AG04449 (cell line): ENCODE measurements at regions of chr16 and their contacts with region 1.

Region 1: GRCh38 chr16:68310761-68311511 is at the starts of genes PRMT7 and SLC7A6OS:
- DNase-seq: no peak
- H3K4me3 ChIP-seq: peak within 1 kb of the TSS; percentile 96
- CTCF ChIP-seq: no peak

Region 2: DNA sequence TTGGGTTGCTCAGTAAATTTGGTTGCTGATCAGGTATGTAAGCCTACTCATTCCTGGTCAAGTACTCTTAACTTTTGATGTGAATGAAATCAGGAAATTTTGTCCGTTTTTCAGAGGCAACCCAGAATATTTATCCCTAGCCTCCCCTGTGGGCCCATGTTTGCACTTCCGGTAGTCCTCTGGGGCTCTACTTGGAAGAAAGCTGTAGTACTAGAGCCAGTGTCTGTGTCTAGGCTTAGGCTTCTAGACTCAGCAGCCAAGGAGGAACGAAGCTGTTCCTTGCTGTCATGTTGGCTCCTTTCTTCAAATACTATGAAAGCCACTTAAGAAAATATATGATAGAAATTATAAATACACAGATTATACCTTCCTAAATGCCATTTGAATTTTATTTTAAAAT is 96.2 kb before region 1 on chr16:
- CTCF ChIA-PET with region 1: no interaction called
- POLR2A ChIA-PET with region 1: no interaction called
- DNase-seq: no peak
- H3K4me3 ChIP-seq: no peak overlapping the region
- CTCF ChIP-seq: no peak

Region 3: DNA sequence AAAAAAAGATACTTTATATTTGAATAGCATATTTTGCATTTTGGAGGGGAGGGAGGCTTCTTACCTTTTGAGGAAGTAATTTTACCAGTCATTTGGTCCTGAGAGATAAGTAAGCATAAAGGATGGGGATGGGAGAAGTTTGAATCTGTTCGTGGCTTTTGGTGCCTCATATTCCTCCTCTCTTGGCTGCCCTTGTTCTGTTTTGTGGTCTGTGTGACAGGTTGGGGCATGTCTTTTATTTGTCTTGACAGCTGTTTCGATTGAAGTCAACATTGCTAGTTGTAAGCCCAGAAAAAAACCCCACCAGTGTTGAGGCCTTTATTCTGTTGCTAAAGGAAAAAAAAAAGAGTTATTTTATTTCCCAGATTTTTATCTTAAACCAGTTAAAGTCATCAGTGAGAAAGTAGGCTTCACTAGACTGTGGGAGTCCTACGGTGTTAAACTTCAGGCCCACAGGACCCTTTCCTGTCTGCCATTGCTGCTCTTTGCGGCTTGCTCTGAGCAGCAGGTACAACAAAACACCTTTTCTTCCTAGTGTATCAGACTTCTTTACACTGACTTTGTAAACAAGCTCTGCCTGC is 35.2 kb before region 1 on chr16:
- CTCF ChIA-PET with region 1: no interaction called
- POLR2A ChIA-PET with region 1: no interaction called
- DNase-seq: no peak
- H3K4me3 ChIP-seq: no peak overlapping the region
- CTCF ChIP-seq: no peak

Region 4: GRCh38 chr16:68289621-68290329 is 21.2 kb before region 1 on chr16:
- CTCF ChIA-PET with region 1: interaction called, 3 read pairs
- POLR2A ChIA-PET with region 1: interaction called, 19 read pairs
- DNase-seq: no peak
- H3K4me3 ChIP-seq: no peak overlapping the region
- CTCF ChIP-seq: no peak